ENCODE measurements at regions of chr22 and their contacts with region 1.

Region 1: GRCh38 chr22:41285820-41286638 is at the start of gene RANGAP1:
- H3K4me3 ChIP-seq: peak within 1 kb of the TSS; percentile 95
- H3K27ac ChIP-seq: peak within 1 kb of the TSS; percentile 81
- H3K4me1 ChIP-seq: peaks cover 9% of the 10 kb centered on the region
- CTCF ChIP-seq: peak; percentile 71

Region 2: GRCh38 chr22:41274856-41275255 is 11.2 kb before region 1 on chr22:
- CTCF ChIA-PET with region 1: interaction called, 3 read pairs
- POLR2A ChIA-PET with region 1: interaction called, 12 read pairs
- H3K4me3 ChIP-seq: no peak overlapping the region
- H3K27ac ChIP-seq: no peak overlapping the region
- H3K4me1 ChIP-seq: no peaks in the 10 kb centered on the region
- CTCF ChIP-seq: no peak

Region 3: GRCh38 chr22:41301105-41302020 is 15.3 kb after region 1 on chr22 and contains the start of gene ZC3H7B:
- CTCF ChIA-PET with region 1: interaction called, 8 read pairs
- POLR2A ChIA-PET with region 1: interaction called, 24 read pairs
- H3K4me3 ChIP-seq: peak within 1 kb of the TSS; percentile 82
- H3K27ac ChIP-seq: peak within 1 kb of the TSS; percentile 93
- H3K4me1 ChIP-seq: peaks cover 4% of the 10 kb centered on the region; the same call in 1 of the 2 replicates
- CTCF ChIP-seq: peak; percentile 82

Region 4: GRCh38 chr22:41308054-41308453 is 22.0 kb after region 1 on chr22:
- CTCF ChIA-PET with region 1: no interaction called
- POLR2A ChIA-PET with region 1: interaction called, 13 read pairs
- H3K4me3 ChIP-seq: no peak overlapping the region
- H3K27ac ChIP-seq: no peak overlapping the region
- H3K4me1 ChIP-seq: no peaks in the 10 kb centered on the region; the same call in 1 of the 2 replicates
- CTCF ChIP-seq: no peak

Region 5: DNA sequence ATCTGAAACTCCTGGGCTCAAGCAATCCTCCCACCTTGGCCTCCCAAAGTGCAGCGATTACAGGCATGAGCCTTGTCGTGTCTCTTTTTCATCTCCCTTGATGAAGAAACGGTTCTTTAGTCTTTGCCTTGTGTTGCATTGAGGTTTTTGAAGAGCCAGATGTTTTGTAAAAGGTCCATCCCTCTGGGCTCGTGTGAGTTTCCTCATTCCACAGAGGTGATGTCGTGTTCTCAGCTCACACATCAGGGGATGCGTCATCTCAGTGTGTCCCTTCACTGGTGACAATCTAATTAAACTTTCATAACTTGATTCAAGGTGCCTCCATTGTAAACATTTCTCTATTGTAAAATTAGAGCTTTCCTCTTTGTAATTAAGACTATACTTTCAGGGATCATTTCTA is 66.0 kb after region 1 on chr22:
- CTCF ChIA-PET with region 1: no interaction called
- POLR2A ChIA-PET with region 1: no interaction called
- H3K4me3 ChIP-seq: no peak overlapping the region
- H3K27ac ChIP-seq: no peak overlapping the region
- H3K4me1 ChIP-seq: no peaks in the 10 kb centered on the region
- CTCF ChIP-seq: no peak

Region 6: DNA sequence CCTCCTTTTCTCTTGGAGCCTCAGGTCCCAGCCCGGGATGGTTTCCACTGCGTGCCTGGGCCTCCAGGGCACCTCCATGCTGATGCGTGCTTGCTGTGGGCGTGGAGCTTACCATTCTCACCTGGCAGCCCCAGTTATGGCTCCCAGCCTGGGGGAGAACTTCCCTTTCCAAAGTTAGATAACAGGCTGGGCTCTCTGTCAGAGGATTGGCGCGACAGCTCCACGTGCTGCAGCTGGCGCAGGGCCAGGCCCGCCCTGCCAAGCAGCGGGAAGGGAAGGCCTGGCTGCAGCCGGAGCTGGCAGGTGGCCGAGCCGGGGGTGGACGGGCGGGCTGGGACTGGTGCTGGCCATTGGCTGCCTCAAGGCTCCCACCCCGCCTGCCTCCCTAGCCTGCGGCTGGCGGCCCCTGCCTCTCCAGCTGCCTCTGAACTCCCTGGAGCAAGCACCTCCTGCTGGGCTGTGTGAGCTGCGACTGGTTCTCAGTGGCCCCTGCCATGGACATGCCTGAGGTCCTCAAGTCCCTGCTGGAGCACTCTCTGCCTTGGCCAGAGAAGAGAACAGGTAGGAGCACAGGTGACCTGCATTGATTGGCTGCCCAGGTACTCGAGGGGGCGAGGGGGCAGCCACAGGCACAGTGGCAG is 81.1 kb after region 1 on chr22:
- CTCF ChIA-PET with region 1: no interaction called
- POLR2A ChIA-PET with region 1: interaction called, 13 read pairs
- H3K4me3 ChIP-seq: peak overlapping the region; percentile 12; the same call in 1 of the 2 replicates
- H3K27ac ChIP-seq: peak overlapping the region; percentile 51; the same call in 1 of the 2 replicates
- H3K4me1 ChIP-seq: peaks cover 11% of the 10 kb centered on the region
- CTCF ChIP-seq: peak; percentile 56

Region 7: GRCh38 chr22:41381329-41382097 is 95.5 kb after region 1 on chr22 and contains the start of gene TEF:
- CTCF ChIA-PET with region 1: no interaction called
- POLR2A ChIA-PET with region 1: interaction called, 45 read pairs
- H3K4me3 ChIP-seq: peak within 1 kb of the TSS; percentile 66
- H3K27ac ChIP-seq: peak within 1 kb of the TSS; percentile 75
- H3K4me1 ChIP-seq: peaks cover 9% of the 10 kb centered on the region
- CTCF ChIP-seq: no peak

Region 8: DNA sequence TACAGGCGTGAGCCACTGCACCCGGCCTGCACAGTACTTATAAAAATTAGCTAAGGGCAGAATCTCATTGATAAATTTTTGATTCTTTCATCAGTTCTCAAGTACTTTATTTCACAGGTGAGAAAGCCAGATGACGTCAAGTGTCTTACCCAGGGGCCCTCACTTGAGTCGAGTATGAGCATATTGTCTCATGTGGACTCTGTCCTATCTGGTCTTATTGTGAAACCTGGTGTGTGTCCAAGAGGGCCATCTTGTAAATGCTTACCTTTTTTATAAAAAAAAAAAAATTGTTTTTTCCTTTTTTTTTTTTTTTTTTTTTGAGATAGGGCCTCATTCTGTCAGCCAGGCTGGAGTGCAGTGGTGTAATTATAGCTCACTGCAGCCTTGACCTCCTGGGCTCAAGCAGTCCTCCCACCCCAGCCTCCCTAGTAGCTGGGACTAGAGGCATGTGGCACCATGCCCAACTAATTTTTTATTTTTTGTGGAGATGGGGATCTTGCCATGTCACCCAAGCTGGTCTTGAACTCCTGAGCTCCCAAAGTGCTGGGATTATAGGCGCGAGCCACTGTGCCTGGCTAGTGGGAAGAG is 188.9 kb after region 1 on chr22:
- CTCF ChIA-PET with region 1: no interaction called
- POLR2A ChIA-PET with region 1: no interaction called
- H3K4me3 ChIP-seq: no peak overlapping the region
- H3K27ac ChIP-seq: no peak overlapping the region
- H3K4me1 ChIP-seq: no peaks in the 10 kb centered on the region
- CTCF ChIP-seq: no peak

Measured in HEK293 (cell line).